Left ventricle myocardium inferior (tissue), 1 donor: ENCODE measurements at regions of chr18 and their contacts with region 1.

Region 1: DNA sequence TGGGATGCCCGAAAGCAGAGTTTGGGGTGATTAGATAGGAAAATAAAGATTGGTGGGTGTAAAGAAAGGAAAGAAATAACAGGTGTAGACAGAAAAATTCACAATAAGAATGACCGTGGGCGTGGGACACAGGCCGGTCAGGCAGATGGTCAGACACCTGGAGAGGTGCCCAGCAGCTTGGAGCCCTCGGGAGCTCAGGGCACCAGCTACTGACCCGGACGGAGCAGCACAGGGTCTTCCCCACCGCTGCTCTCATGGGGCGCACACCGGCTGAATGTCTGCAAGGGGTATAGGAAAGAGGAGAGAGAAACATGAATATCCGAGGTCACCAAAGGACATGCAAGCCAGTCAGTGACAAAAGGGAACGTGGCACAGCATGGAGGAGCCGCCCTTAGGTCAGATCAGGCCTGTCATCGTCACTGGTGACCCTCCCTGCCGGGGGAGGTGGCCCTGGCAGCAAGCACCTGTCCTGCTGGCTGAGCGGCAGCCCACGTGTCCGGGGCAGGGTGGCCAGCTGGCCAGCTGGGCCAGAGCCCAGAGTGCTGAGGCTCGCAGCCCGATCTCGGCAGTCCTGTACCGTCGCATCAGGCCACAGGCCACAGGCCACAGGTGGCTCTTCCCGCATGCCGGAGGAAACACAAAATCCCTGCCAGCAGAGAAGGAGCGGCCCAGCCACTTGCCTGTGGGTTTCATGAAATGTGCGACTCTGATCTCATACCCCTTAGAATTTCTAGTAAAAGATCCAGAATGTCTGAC is 112.0 kb upstream of the NDUFV2 start:
- DNase-seq: peak; percentile 28
- H3K4me3 ChIP-seq: no peak overlapping the region
- H3K27ac ChIP-seq: no peak overlapping the region
- H3K4me1 ChIP-seq: no peaks in the 10 kb centered on the region
- H3K27me3 ChIP-seq: no peaks in the 10 kb centered on the region
- CTCF ChIP-seq: no peak

Region 2: GRCh38 chr18:8696749-8697211 is 293.7 kb before region 1 on chr18:
- intact Hi-C with region 1: loop called (anchors 5 kb)
- DNase-seq: peak; percentile 79
- H3K4me3 ChIP-seq: no peak overlapping the region
- H3K27ac ChIP-seq: no peak overlapping the region
- H3K4me1 ChIP-seq: no peaks in the 10 kb centered on the region
- H3K27me3 ChIP-seq: no peaks in the 10 kb centered on the region
- CTCF ChIP-seq: peak; percentile 94

Region 3: GRCh38 chr18:8721716-8722115 is 268.7 kb before region 1 on chr18:
- intact Hi-C with region 1: no loop called
- DNase-seq: no peak
- H3K4me3 ChIP-seq: no peak overlapping the region
- H3K27ac ChIP-seq: no peak overlapping the region
- H3K4me1 ChIP-seq: no peaks in the 10 kb centered on the region
- H3K27me3 ChIP-seq: no peaks in the 10 kb centered on the region
- CTCF ChIP-seq: no peak

Region 4: DNA sequence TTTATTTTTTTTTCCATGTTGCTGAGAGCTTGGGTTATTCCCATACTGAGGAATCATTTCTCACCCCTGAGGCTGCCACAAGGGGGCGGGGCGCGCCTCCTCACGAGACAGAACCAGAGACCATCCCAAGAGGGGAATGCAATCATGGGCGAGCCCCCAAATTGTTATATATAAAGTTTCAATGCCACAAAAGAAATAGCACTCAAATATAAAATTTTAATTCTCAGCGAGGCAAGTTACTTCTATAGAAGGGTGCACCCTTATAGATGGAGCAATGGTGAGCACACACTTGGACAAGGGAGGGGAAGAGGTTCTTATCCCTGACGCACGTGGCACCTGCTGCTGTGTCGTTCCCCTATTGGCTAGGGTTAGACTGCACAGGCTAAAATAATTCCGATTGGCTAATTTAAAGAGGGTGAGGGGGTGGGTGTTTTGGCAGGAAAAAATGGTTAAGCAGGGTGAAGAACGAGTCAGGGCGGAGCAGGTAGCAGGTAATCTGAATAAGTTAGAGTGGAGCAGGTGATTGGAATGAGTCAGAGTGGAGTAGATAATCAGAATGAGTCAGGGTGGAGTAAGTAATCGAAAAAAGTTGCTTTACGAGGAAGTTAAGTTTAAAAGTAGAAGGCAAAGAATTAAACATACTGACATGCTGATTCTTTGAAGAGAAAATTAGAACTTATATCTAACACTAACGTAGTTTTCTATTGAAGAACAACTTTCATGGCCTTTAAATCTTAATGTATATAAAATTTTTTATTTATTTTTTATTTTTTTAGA is 107.6 kb before region 1 on chr18:
- intact Hi-C with region 1: no loop called
- DNase-seq: no peak
- H3K4me3 ChIP-seq: no peak overlapping the region
- H3K27ac ChIP-seq: no peak overlapping the region
- H3K4me1 ChIP-seq: no peaks in the 10 kb centered on the region
- H3K27me3 ChIP-seq: peaks cover 5% of the 10 kb centered on the region
- CTCF ChIP-seq: no peak